ENCODE measurements at regions of chr17 and their contacts with region 1.

Region 1: DNA sequence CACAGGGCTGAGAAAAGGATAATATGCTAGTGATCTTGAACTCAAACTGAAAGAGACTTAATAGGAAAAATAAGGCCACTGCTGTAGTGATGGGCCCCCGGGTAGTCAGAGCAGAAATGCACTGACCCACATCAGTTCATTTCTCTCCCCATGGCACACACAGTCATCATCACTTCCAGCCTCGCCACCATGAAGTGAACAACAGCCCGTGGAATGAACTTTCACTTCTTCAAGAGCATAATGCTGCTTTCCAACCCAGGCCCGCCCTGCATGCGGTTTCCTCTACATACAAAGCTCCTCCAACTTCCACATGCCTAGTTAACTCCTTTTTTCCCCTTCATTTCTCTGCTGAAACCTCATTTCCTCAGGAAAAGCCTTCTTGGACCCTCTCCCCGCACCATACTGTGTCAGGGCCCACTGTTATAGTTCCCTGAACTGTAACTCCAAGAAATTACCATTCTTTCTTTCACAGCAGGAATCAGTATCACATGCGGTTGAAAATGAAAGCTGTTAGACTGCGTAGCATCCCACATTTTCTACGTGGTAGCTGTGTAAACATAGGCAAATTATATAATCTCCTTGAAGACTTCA is 65.8 kb upstream of the SMIM36 start:
- DNase-seq: peak; percentile 77
- H3K4me3 Mint-ChIP-seq: no peak overlapping the region
- H3K27ac Mint-ChIP-seq: no peak overlapping the region
- H3K4me1 Mint-ChIP-seq: peaks cover 29% of the 10 kb centered on the region
- H3K27me3 Mint-ChIP-seq: no peaks in the 10 kb centered on the region

Region 2: DNA sequence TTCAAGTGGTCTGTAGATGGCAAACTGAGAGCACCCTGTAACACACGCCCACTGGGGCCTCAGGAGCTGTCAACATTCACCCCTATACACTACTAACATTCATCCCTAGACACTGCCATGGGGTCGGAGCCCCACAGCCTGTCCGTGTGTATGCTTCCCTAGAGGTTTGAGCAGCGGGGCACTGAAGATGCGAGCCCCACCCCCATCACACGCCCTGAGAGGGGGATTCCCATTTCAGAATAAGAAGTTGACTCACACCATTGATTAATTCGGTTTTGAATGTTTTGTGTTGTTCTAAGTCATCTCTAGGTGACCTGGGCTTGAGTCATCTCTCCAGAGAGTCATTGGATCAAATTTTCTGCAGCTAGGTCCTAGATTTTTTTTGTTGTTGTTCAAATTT is 118.1 kb before region 1 on chr17:
- CTCF ChIA-PET with region 1: no interaction called
- intact Hi-C with region 1: loop called (anchors 2 kb)
- DNase-seq: peak; percentile 80
- H3K4me3 Mint-ChIP-seq: no peak overlapping the region
- H3K27ac Mint-ChIP-seq: no peak overlapping the region
- H3K4me1 Mint-ChIP-seq: peaks cover 19% of the 10 kb centered on the region
- H3K27me3 Mint-ChIP-seq: no peaks in the 10 kb centered on the region

Region 3: GRCh38 chr17:55563363-55563762 is 13.7 kb before region 1 on chr17:
- CTCF ChIA-PET with region 1: interaction called, 3 read pairs
- intact Hi-C with region 1: loop called (anchors 1 kb)
- DNase-seq: no peak
- H3K4me3 Mint-ChIP-seq: no peak overlapping the region
- H3K27ac Mint-ChIP-seq: no peak overlapping the region
- H3K4me1 Mint-ChIP-seq: peaks cover 7% of the 10 kb centered on the region
- H3K27me3 Mint-ChIP-seq: peaks cover 4% of the 10 kb centered on the region

Region 4: DNA sequence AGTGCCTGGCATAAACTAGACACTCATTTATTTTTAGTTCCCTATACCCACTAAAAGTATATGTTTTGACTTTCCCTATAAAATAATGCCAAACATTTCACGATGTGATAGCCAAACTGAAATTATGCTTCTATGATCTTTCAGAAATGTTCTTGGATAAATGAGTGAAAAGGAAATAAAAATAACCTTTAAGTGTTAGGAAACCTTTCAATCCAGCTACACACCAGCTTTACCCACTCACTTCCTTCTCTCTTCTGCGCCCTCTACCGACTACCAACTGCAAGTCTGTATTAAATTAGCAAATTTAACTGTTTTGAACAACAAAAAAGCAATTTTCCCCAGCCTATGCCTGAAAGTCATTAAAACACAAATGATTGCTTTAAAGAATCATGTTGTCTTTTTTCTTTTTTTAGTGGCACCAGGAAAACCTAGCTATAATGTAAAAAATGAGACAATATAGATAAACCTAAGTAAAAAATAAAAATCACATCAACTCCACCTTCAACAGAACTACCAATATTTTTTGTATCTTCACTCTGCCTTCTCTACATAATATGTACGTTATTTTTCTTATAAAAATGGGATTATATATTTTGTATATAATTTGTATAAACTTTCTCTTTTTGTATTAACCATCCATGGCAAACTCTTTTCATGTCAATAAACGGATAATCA is 158.8 kb after region 1 on chr17:
- CTCF ChIA-PET with region 1: interaction called, 10 read pairs
- intact Hi-C with region 1: loop called (anchors 1 kb)
- DNase-seq: peak; percentile 64
- H3K4me3 Mint-ChIP-seq: no peak overlapping the region
- H3K27ac Mint-ChIP-seq: no peak overlapping the region
- H3K4me1 Mint-ChIP-seq: peaks cover 30% of the 10 kb centered on the region
- H3K27me3 Mint-ChIP-seq: peaks cover 27% of the 10 kb centered on the region

Region 5: DNA sequence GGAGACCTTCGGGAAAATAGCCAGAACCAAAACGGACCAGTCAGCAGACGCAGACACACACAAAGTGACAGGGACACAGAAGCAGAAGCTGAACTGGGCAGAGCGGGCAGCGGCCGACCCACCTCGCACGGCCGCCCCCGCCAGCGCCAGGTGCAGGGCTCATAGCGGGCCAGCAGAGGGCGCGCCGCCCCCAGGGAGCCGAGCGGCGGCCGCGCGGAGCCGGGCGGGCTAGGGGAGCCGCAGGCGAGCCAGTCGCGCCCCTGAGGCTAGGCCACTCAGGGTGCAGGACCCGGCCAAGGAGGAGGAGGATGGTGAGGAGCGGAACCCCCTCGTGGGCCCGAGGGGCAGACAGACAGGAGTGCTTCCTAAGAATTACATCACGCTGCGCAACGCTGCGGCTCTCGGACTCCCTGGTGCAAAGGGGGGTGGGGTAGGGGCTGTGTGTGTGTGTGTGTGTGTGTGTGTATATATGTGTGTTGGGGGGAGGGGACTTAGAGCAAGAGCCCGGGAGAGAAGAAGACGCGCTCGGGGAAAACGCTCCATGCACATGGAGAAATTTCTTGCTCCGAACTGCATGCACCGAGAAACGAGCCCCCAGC is 1015.5 kb after region 1 on chr17:
- CTCF ChIA-PET with region 1: no interaction called
- intact Hi-C with region 1: loop called (anchors 10 kb)
- DNase-seq: peak; percentile 66
- H3K4me3 Mint-ChIP-seq: peak overlapping the region; percentile 79
- H3K27ac Mint-ChIP-seq: no peak overlapping the region
- H3K4me1 Mint-ChIP-seq: peaks cover 17% of the 10 kb centered on the region
- H3K27me3 Mint-ChIP-seq: no peaks in the 10 kb centered on the region

Measured in activated naive CD4-positive, alpha-beta T cell treated with anti-CD3 and anti-CD28 coated beads for 36 hours (primary cell).